KBM-7 (cell line): ENCODE measurements at regions of chr1 and their contacts with region 1.

Region 1: GRCh38 chr1:147494998-147495580 is 46.2 kb upstream of the BCL9 start:
- DNase-seq: peak; percentile 58

Region 2: GRCh38 chr1:147599362-147600118 is 104.5 kb after region 1 on chr1:
- in situ Hi-C with region 1: loop called (anchors 25 kb)
- DNase-seq: peak; percentile 77